ENCODE measurements at regions of chr1 and their contacts with region 1.

Region 1: GRCh38 chr1:147545133-147545532 is 3.8 kb downstream of the BCL9 start:
- DNase-seq: peak; percentile 55 to 94 (median 83)
- ATAC-seq: peak; percentile 86 to 90
- H3K4me3 Mint-ChIP-seq: peak overlapping the region in 6 of 10 donors; percentile 48 to 85 (median 70)
- H3K27ac Mint-ChIP-seq: peak overlapping the region in 5 of 10 donors; percentile 23 to 82 (median 73)
- H3K4me1 Mint-ChIP-seq: peaks cover 21 to 68% (median 32%) of the 10 kb centered on the region in 4 donors
- H3K27me3 Mint-ChIP-seq: peaks cover 0 to 4% (median 0%) of the 10 kb centered on the region in 5 donors

Region 2: GRCh38 chr1:147527941-147528936 is 16.9 kb before region 1 on chr1:
- POLR2A ChIA-PET with region 1: interaction called, 18 read pairs
- DNase-seq: peak in 4 of 10 donors; percentile 23 to 49 (median 32)
- ATAC-seq: peak; percentile 76 to 98
- H3K4me3 Mint-ChIP-seq: no peak overlapping the region
- H3K27ac Mint-ChIP-seq: no peak overlapping the region
- H3K4me1 Mint-ChIP-seq: peaks cover 0 to 1% (median 0%) of the 10 kb centered on the region in 4 donors
- H3K27me3 Mint-ChIP-seq: peaks cover 0 to 4% (median 0%) of the 10 kb centered on the region in 5 donors

Region 3: DNA sequence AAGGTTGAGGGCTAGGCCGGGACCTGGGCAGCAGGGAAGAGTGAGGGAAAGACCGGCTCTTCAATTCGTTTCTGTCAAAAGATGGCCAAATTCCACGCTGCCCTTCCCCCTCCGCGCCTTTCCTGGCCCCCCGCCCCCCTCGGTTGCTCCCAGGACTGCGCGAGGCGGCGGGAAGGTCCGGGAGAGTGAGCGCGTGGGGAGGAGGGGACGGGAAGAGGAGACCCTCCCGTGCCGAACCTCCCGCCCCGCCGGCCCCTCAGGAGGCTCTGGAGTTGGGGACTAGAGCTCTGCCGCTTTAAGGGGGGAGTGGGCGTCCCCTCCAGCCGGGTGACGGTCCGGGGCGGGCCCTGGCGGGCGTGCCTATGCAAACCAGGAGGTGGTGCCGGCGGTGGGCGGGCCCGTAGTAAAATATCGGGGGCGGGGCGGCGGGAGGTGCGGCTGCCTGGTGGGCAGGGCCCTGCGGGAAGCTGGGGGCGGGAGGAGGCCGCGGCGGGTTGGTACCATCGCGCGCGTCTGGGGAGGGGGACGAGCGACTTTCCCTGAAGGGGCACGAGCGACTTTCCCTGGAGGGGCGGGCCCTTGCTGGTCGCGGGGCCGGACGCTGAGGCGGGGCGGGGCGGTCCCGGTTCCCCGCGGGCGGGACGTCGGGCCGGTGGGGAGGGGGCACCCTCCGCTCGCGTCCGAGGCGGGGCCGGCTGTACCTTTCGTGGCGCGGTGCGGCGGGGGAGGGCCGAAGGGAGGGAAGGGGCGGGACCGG is 54.4 kb after region 1 on chr1:
- POLR2A ChIA-PET with region 1: interaction called, 73 read pairs
- DNase-seq: peak; percentile 92 to 98 (median 96)
- ATAC-seq: peak; percentile 80 to 81
- H3K4me3 Mint-ChIP-seq: peak overlapping the region; percentile 85 to 98 (median 92)
- H3K27ac Mint-ChIP-seq: peak overlapping the region in 9 of 10 donors; percentile 27 to 94 (median 91)
- H3K4me1 Mint-ChIP-seq: peaks cover 16 to 31% (median 24%) of the 10 kb centered on the region in 4 donors
- H3K27me3 Mint-ChIP-seq: no peaks in the 10 kb centered on the region